ENCODE measurements at regions of chr16 and their contacts with region 1.

Region 1: GRCh38 chr16:22217889-22218730 is 12.0 kb downstream of the EEF2K start:
- DNase-seq: peak; percentile 86
- CTCF ChIP-seq: no peak

Region 2: GRCh38 chr16:22206013-22206841 is 11.9 kb before region 1 on chr16 and contains the start of gene EEF2K:
- CTCF ChIA-PET with region 1: interaction called, 77 read pairs
- POLR2A ChIA-PET with region 1: interaction called, 16 read pairs
- DNase-seq: peak; percentile 93
- CTCF ChIP-seq: peak; percentile 87